Mammary epithelial cell (primary cell): ENCODE measurements at regions of chr10 and their contacts with region 1.

Region 1: DNA sequence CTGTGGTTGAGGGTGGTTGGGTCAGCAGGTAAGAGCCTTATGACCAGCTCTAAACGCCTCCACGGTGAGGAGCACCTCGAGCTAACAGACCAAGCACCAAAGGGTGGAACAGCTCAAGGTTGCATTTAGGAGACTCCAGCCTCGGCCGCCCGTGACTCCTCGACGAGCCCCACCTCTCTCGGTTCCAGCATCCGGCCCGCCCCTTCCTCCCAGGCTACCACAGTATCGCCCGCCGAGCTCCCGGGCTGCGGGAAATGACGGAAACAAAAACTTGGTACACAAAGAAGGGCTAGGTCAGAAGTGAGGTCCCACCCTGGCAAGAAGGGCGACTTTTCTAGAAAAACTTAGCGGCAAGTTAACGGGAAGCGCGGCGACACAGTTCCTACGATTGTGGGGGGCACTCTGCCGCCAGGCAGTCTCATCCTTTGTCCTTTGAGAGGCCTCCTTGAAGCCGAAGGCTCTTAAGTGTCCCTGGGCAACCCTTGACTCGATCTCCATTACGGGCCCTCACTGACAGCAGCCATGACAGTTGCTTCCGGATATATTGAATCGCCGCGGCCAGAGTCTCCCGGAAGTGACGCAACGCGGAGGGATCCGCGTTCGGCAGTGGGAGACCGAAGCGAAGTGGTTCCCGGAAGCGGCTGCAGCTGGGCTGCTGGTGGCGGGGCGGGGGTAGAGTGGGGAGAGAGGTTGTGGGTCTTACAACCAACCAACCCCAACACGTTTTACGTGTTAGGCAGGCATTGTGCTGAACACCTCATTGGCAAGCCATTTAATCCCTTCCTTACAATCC is 40.2 kb upstream of the ZNF518A start:
- DNase-seq: peak; percentile 93
- H3K4me3 ChIP-seq: peak overlapping the region; percentile 59 to 89 (median 69)
- H3K27ac ChIP-seq: peak overlapping the region; percentile 95
- H3K4me1 ChIP-seq: peaks cover 3% of the 10 kb centered on the region
- H3K27me3 ChIP-seq: no peaks in the 10 kb centered on the region
- CTCF ChIP-seq: no peak

Region 2: DNA sequence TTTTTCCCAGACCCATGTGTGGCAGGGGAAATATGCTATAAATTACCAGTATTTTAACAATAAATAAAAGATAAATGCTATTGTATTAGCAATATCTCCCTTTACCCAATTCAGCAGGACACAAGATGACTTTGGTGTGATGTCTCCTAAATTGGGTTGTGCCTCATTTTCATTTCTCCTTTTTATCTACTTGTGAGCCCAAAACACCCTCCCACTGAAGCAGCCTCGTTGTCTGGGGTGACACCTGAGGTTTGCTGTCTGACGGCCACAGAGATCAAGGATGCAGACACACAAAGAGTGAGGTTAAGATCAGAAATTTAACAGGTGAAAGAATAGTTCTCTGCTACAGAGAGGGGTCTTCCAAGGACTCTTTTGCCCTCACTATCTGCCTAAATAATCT is 209.2 kb before region 1 on chr10:
- CTCF ChIA-PET with region 1: no interaction called
- dilution Hi-C with region 1: no loop called
- in situ Hi-C with region 1: no loop called
- intact Hi-C with region 1: no loop called
- DNase-seq: no peak
- H3K4me3 ChIP-seq: no peak overlapping the region
- H3K27ac ChIP-seq: no peak overlapping the region
- H3K4me1 ChIP-seq: no peaks in the 10 kb centered on the region
- H3K27me3 ChIP-seq: no peaks in the 10 kb centered on the region
- CTCF ChIP-seq: no peak

Region 3: GRCh38 chr10:96129387-96130325 is 39.8 kb after region 1 on chr10 and contains the start of gene ZNF518A:
- CTCF ChIA-PET with region 1: no interaction called
- dilution Hi-C with region 1: no loop called
- in situ Hi-C with region 1: loop called in 1 of 2 experiments (anchors 5 kb)
- intact Hi-C with region 1: loop called (anchors 1 kb)
- DNase-seq: peak; percentile 95
- H3K4me3 ChIP-seq: peak within 1 kb of the TSS; percentile 66 to 97 (median 81)
- H3K27ac ChIP-seq: peak within 1 kb of the TSS; percentile 98
- H3K4me1 ChIP-seq: peaks cover 17% of the 10 kb centered on the region
- H3K27me3 ChIP-seq: no peaks in the 10 kb centered on the region
- CTCF ChIP-seq: no peak
- total RNA-seq, gene ZNF518A: 17.3 to 20.3 TPM